HEK293 (cell line): ENCODE measurements at regions of chr15 and their contacts with region 1.

Region 1: GRCh38 chr15:69468241-69469121 is 15.9 kb downstream of the RPLP1 start:
- H3K4me3 ChIP-seq: no peak overlapping the region
- H3K27ac ChIP-seq: peak overlapping the region; percentile 60
- H3K4me1 ChIP-seq: peaks cover 18% of the 10 kb centered on the region
- CTCF ChIP-seq: no peak

Region 2: DNA sequence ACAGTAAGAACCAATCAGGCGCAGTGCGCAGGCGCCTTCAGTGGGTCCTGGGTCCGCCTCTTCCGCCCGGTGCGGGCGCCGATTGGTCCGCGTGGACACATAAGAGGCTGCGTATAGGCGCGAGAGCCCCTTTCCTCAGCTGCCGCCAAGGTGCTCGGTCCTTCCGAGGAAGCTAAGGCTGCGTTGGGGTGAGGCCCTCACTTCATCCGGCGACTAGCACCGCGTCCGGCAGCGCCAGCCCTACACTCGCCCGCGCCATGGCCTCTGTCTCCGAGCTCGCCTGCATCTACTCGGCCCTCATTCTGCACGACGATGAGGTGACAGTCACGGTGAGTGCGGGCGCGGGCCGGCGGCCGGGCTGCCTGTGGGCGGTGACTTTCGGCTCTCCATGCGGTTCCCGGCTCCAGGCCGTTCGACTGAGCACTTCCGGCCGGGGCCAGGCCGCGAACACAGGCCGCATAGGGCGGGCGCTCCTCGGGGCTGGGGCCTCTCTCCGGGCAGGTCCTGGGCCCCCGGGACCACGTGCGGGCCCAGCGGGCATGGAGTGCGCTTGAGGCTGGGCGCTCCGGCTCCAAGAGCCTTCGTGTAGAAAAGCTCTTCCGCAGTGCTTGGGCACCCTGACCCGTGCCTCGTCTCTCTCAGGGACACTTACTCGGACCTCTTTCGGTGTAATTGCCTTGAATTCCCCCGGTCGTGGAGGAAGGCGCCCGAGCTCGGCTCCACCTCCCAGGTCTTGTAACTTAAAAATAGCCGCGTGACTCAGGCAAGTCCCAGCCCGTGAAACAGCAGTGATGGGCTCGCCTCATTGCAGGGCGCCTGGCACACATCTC is 15.6 kb before region 1 on chr15 and contains the start of gene RPLP1:
- CTCF ChIA-PET with region 1: interaction called, 29 read pairs
- POLR2A ChIA-PET with region 1: interaction called, 107 read pairs
- H3K4me3 ChIP-seq: peak within 1 kb of the TSS; percentile 89
- H3K27ac ChIP-seq: peak within 1 kb of the TSS; percentile 78
- H3K4me1 ChIP-seq: peaks cover 10% of the 10 kb centered on the region
- CTCF ChIP-seq: peak; percentile 66

Region 3: DNA sequence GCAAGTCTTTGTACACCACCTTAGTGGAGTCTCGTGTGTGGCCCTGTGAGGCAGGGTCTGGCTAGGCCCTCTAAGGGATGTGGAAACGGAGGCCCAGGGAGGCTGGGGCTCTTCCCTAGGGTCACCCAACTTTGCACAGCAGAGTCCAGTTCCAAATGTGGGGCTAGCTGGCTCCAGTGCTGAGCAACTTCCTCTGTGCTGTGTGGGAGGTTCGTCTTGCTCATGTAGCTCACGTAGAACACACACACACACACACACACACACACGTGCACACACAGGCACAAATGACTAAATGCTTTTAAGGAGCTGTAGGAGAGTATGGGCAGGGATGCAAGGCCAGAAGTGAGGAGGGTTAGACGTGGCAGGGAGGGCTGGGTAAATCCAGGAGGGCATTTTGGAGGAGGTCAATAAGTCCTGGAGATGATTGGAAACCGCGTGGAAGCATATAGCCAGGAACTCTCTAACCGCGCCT is 198.0 kb after region 1 on chr15:
- CTCF ChIA-PET with region 1: no interaction called
- POLR2A ChIA-PET with region 1: no interaction called
- H3K4me3 ChIP-seq: no peak overlapping the region
- H3K27ac ChIP-seq: no peak overlapping the region
- H3K4me1 ChIP-seq: no peaks in the 10 kb centered on the region
- CTCF ChIP-seq: no peak